WTC11 (cell line): ENCODE measurements at regions of chr19 and their contacts with region 1.

Region 1: DNA sequence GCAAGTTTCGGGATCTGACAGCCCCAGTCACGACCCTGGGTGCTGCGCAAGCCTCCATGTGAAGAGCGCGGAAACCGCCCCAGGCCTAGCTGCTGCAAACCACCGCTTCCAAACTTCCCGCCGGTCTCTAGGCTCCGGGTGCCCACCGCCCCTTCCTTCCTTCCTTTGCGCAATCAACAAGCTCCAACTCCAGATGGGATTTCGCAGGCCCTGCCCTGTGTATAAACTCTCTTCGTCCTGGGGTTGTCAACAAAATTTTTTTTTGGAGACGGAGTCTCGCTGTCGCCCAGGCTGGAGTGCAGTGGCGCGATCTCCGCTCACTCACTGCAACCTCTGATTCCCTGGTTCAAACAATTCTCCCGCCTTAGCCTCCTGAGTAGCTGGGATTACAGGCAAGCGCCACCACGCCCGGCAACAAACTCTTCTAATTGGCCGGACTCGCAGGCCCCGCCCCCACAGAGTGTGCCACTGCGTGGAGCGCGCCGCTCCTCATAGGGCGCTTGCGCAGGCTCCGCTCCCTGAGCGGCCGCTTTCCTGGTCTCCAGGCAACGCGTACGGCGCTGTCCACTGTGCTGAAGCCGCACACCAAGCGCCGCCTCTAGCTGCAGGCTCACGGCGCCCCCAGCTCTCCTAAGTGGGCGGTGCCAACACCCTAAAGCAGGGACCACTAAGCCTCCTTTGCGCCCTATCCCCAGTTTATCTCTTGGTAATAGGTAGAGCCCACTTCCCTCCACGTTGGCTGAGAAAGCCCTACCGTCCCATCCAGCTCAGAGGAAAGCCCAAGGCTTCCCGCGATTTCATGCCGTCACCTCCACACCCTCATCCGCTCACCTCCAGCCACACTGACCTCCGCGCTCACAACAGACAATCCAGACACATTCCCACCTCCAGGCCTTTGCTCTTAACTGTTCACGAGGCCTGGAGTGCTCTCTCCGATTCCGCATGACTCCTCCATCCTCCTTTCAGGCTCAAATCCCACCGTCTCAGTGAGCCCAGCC is 5.5 kb upstream of the QTRT1 start:
- DNase-seq: peak; percentile 99
- ATAC-seq: peak; percentile 88
- H3K4me3 Mint-ChIP-seq: peak overlapping the region; percentile 76
- H3K27ac Mint-ChIP-seq: peak overlapping the region; percentile 98
- H3K4me1 Mint-ChIP-seq: peaks cover 22% of the 10 kb centered on the region
- H3K27me3 Mint-ChIP-seq: peaks cover 5% of the 10 kb centered on the region
- CTCF ChIP-seq: no peak

Region 2: DNA sequence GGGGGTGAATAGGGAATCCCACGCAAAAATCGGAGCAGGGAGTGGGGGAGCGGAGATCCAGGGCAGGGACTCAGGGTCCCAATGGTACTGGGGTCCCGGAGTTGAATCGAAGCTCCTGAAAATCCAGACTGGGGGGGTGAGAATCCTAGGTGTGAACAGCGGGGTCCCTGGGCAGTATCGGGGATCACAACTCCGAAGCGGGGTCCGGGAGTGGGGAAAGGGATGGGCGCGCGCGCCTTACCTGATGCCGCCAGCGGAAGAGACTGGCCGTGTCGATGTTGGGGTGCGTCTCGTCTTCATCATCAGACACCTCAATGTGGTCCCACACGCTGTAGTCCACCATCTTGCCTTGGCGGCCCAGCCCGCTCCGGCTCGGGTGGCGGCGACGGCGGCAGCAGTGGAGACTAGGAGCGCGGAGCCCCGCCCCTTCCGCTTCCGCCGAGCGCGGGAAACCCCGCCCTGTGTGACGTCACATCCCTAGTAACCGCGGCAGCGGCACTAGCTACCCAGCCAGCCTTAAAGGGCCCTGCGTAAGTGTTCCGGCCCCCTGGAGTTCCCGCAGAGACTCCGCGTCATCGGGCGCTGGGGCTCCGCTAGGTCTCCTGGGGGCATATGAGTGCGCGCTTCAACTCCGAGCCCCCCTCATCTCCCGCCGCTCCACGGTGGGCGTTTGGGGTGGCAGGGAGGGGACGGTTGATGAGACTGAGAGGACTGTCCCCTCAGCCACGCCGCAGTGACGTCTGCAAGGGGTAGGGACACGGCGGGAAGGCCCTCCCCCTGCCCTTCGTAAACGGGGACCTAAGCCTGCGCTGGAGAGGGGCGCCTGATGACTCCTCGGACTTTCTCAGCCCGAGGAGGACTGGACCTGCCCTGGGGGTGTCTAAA is 292.3 kb before region 1 on chr19 and contains the start of gene CDC37:
- CTCF ChIA-PET with region 1: interaction called, 12 read pairs
- POLR2A ChIA-PET with region 1: no interaction called
- DNase-seq: peak; percentile 98
- ATAC-seq: peak; percentile 79
- H3K4me3 Mint-ChIP-seq: peak within 1 kb of the TSS; percentile 96
- H3K27ac Mint-ChIP-seq: peak within 1 kb of the TSS; percentile 89
- H3K4me1 Mint-ChIP-seq: peaks cover 19% of the 10 kb centered on the region
- H3K27me3 Mint-ChIP-seq: peaks cover 40% of the 10 kb centered on the region
- CTCF ChIP-seq: no peak
- total RNA-seq, gene CDC37: 163 to 204 TPM (median 164 TPM) in 3 replicates

Region 3: GRCh38 chr19:10517760-10518443 is 177.8 kb before region 1 on chr19:
- CTCF ChIA-PET with region 1: interaction called, 19 read pairs
- POLR2A ChIA-PET with region 1: interaction called, 3 read pairs
- DNase-seq: peak; percentile 65
- ATAC-seq: peak; percentile 38
- H3K4me3 Mint-ChIP-seq: peak overlapping the region; percentile 80
- H3K27ac Mint-ChIP-seq: no peak overlapping the region
- H3K4me1 Mint-ChIP-seq: peaks cover 35% of the 10 kb centered on the region
- H3K27me3 Mint-ChIP-seq: peaks cover 69% of the 10 kb centered on the region
- CTCF ChIP-seq: no peak

Region 4: GRCh38 chr19:10551698-10552301 is 143.9 kb before region 1 on chr19:
- CTCF ChIA-PET with region 1: interaction called, 27 read pairs
- POLR2A ChIA-PET with region 1: interaction called, 3 read pairs
- DNase-seq: peak; percentile 41
- ATAC-seq: peak; percentile 38
- H3K4me3 Mint-ChIP-seq: no peak overlapping the region
- H3K27ac Mint-ChIP-seq: no peak overlapping the region
- H3K4me1 Mint-ChIP-seq: no peaks in the 10 kb centered on the region
- H3K27me3 Mint-ChIP-seq: no peaks in the 10 kb centered on the region
- CTCF ChIP-seq: no peak

Region 5: GRCh38 chr19:10580979-10581631 is 114.6 kb before region 1 on chr19:
- CTCF ChIA-PET with region 1: interaction called, 43 read pairs
- POLR2A ChIA-PET with region 1: no interaction called
- DNase-seq: peak; percentile 94
- ATAC-seq: peak; percentile 91
- H3K4me3 Mint-ChIP-seq: no peak overlapping the region
- H3K27ac Mint-ChIP-seq: peak overlapping the region; percentile 84
- H3K4me1 Mint-ChIP-seq: peaks cover 5% of the 10 kb centered on the region
- H3K27me3 Mint-ChIP-seq: no peaks in the 10 kb centered on the region
- CTCF ChIP-seq: peak; percentile 96

Region 6: GRCh38 chr19:10611907-10612306 is 83.8 kb before region 1 on chr19:
- CTCF ChIA-PET with region 1: no interaction called
- POLR2A ChIA-PET with region 1: no interaction called
- DNase-seq: no peak
- ATAC-seq: no peak
- H3K4me3 Mint-ChIP-seq: no peak overlapping the region
- H3K27ac Mint-ChIP-seq: no peak overlapping the region
- H3K4me1 Mint-ChIP-seq: no peaks in the 10 kb centered on the region
- H3K27me3 Mint-ChIP-seq: no peaks in the 10 kb centered on the region
- CTCF ChIP-seq: no peak

Region 7: DNA sequence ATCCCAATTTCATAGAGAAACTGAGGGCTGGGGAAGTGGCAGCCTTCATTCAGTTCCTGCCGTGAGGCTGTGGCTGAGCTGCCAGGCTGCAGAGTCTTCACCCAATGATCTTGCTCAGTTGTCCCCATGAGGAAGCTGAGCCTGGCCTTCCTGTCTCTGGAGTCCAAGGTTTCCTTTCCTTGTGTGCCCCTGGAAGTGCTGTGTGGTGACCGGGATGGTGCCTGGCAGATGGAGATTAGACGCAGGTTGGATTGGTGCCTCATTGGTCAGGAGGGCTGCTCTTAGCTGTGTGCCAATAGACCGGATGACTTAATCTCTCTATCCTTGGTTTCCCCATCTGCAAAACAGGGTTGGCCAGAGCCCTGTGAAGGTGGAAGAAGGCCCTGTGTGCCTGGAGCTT is 46.8 kb after region 1 on chr19:
- CTCF ChIA-PET with region 1: no interaction called
- POLR2A ChIA-PET with region 1: no interaction called
- DNase-seq: no peak
- ATAC-seq: no peak
- H3K4me3 Mint-ChIP-seq: no peak overlapping the region
- H3K27ac Mint-ChIP-seq: 0 out of 2 replicates have a peak overlapping the region, but pooled peaks have one; percentile 15
- H3K4me1 Mint-ChIP-seq: peaks cover 2% of the 10 kb centered on the region; the same call in 1 of the 2 replicates
- H3K27me3 Mint-ChIP-seq: no peaks in the 10 kb centered on the region
- CTCF ChIP-seq: no peak

Region 8: GRCh38 chr19:10835754-10836477 is 140.2 kb after region 1 on chr19 and contains the start of gene TMED1:
- CTCF ChIA-PET with region 1: interaction called, 18 read pairs
- POLR2A ChIA-PET with region 1: interaction called, 3 read pairs
- DNase-seq: peak; percentile 100
- ATAC-seq: peak; percentile 93
- H3K4me3 Mint-ChIP-seq: peak within 1 kb of the TSS; percentile 85
- H3K27ac Mint-ChIP-seq: peak within 1 kb of the TSS; percentile 100
- H3K4me1 Mint-ChIP-seq: peaks cover 13% of the 10 kb centered on the region
- H3K27me3 Mint-ChIP-seq: peaks cover 24% of the 10 kb centered on the region
- CTCF ChIP-seq: peak; percentile 36; the same call in 1 of the 2 replicates
- total RNA-seq, gene TMED1: 28.5 to 40.9 TPM (median 40.6 TPM) in 3 replicates